A673 (cell line): ENCODE measurements at regions of chr14 and their contacts with region 1.

Region 1: GRCh38 chr14:63727774-63728728 is at the start of gene SGPP1:
- DNase-seq: peak; percentile 84
- H3K4me3 ChIP-seq: peak within 1 kb of the TSS; percentile 93
- H3K27ac ChIP-seq: peak within 1 kb of the TSS; percentile 79
- H3K4me1 ChIP-seq: no peaks in the 10 kb centered on the region
- H3K27me3 ChIP-seq: no peaks in the 10 kb centered on the region
- CTCF ChIP-seq: peak; percentile 40
- total RNA-seq, gene SGPP1: 12.8 and 13.5 TPM in 2 replicates

Region 2: DNA sequence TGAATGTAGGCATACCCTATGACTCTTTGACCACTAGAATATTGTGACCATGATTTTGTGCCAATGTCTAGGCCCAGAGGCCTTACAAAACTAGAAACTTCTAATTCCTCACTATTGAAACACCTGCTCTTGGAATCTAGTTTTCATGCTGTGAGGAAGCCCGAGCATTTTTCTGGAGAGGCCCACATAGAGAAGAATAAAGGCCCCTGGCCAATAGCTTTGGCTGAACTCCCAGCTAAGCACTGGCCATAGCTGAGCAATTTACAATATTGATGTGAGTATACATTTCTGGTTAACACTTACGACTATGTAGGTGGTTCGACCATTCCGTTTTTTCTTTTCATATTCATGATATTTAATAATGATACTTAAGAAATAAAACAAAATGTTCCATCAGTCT is 873.1 kb before region 1 on chr14:
- CTCF ChIA-PET with region 1: no interaction called
- POLR2A ChIA-PET with region 1: no interaction called
- intact Hi-C with region 1: no loop called
- DNase-seq: no peak
- H3K4me3 ChIP-seq: no peak overlapping the region
- H3K27ac ChIP-seq: no peak overlapping the region
- H3K4me1 ChIP-seq: peaks cover 16% of the 10 kb centered on the region
- H3K27me3 ChIP-seq: no peaks in the 10 kb centered on the region
- CTCF ChIP-seq: no peak

Region 3: GRCh38 chr14:63641473-63642228 is 86.4 kb before region 1 on chr14 and contains the start of gene WDR89:
- CTCF ChIA-PET with region 1: no interaction called
- POLR2A ChIA-PET with region 1: no interaction called
- intact Hi-C with region 1: loop called (anchors 5 kb)
- DNase-seq: peak; percentile 100
- H3K4me3 ChIP-seq: peak within 1 kb of the TSS; percentile 54
- H3K27ac ChIP-seq: peak within 1 kb of the TSS; percentile 92
- H3K4me1 ChIP-seq: peaks cover 6% of the 10 kb centered on the region
- H3K27me3 ChIP-seq: no peaks in the 10 kb centered on the region
- CTCF ChIP-seq: peak; percentile 55
- total RNA-seq, gene WDR89: 19.0 and 23.6 TPM in 2 replicates

Region 4: DNA sequence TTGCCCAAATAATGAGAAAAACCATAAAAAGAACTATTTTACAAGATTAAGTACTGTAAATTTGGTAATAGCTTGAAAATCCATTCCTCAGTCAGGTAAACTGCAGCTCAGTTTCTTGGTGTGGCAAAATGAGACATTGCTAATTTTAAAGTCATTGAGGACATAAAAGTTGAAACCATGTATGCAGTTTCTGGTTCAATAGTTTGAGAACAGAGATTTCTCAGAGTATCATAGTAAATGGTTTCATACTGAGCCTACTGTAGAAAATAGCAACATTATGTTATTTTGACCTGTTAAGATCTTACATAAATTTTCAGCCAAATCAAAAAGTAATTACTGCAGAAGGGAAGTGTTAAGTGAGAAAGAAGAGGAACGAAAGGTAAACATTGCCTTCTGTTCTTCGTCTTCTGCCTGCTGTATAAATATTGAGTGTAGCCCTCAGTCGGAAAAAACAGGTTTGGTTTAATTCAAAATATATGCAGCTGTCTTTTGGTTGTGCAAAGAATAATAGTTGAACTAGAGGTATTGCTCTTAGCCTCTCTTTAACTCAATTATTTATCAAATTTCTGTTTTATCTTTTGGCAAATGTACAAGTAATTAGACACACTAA is 244.4 kb after region 1 on chr14:
- CTCF ChIA-PET with region 1: no interaction called
- POLR2A ChIA-PET with region 1: no interaction called
- intact Hi-C with region 1: no loop called
- DNase-seq: no peak
- H3K4me3 ChIP-seq: no peak overlapping the region
- H3K27ac ChIP-seq: no peak overlapping the region
- H3K4me1 ChIP-seq: no peaks in the 10 kb centered on the region
- H3K27me3 ChIP-seq: no peaks in the 10 kb centered on the region
- CTCF ChIP-seq: no peak

Region 5: DNA sequence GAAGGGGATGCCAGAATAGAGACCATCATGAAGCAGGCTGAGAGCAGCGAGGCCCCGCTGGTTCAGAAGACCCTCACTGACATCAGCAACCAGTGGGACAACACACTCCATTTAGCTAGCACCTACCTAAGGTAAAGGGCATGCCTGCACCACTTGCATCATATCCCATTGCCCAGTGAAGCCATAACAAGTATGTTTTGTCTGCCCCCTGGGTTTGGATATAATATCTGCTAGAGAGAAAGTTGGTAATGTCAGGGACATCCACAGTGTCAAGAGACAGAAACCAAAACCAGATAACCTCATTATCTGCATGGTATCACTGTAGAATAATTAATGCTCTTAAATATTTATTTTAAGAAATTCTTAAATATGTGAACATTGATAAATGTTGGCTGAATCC is 298.5 kb after region 1 on chr14:
- CTCF ChIA-PET with region 1: no interaction called
- POLR2A ChIA-PET with region 1: no interaction called
- intact Hi-C with region 1: no loop called
- DNase-seq: no peak
- H3K4me3 ChIP-seq: no peak overlapping the region
- H3K27ac ChIP-seq: no peak overlapping the region
- H3K4me1 ChIP-seq: no peaks in the 10 kb centered on the region
- H3K27me3 ChIP-seq: no peaks in the 10 kb centered on the region
- CTCF ChIP-seq: no peak